Activated naive CD4-positive, alpha-beta T cell treated with anti-CD3 and anti-CD28 coated beads for 36 hours (primary cell): ENCODE measurements at regions of chr15 and their contacts with region 1.

Region 1: DNA sequence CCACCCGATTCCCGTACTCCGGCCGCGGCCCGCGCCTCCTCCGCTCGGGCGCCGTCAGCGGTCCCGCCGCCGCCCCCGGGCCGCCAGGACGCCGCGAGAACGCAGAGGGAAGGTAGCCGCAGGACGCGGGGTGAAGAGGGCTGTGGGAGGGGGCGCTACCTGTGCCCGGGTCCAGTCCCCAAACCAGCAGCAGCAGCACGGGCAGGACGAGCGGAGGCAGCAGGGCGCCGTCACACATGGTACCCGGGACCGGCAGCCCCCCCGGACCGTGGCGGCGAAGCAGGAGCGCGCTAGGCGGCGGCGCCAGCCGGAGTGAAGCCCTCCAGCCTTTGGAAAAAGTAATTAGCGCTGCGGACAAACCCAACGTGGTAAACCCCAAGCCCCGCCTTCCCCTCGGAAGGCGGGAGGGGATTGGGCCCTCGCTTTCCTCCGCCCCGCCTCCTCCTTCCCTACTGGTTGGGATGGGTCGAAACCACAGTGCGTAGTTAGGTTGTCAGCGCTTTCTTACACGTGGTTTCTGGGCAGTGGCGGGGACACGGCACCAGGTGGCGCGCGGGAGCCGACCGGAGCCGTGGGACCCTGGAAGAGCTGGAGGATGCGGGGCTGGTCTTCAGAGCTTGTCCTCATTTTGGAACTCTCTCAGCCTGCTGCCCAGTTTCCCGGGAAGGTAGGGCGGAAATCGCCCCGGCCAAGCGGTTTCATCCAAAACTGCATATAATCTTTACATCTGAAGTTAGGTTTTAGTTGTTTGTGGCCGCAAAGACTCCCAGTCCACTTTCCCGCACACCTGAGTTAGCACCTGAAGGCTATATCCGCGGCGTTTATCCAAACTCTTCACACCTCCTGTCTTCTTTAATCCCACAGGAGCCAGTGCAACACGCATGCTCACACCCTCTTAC is at the start of gene ADAMTS17:
- DNase-seq: peak; percentile 96
- H3K4me3 Mint-ChIP-seq: peak within 1 kb of the TSS; percentile 52
- H3K27ac Mint-ChIP-seq: no peak within 1 kb of the TSS
- H3K4me1 Mint-ChIP-seq: peaks cover 9% of the 10 kb centered on the region
- H3K27me3 Mint-ChIP-seq: no peaks in the 10 kb centered on the region
- total RNA-seq, gene ADAMTS17: 0.81 to 1.0 TPM

Region 2: DNA sequence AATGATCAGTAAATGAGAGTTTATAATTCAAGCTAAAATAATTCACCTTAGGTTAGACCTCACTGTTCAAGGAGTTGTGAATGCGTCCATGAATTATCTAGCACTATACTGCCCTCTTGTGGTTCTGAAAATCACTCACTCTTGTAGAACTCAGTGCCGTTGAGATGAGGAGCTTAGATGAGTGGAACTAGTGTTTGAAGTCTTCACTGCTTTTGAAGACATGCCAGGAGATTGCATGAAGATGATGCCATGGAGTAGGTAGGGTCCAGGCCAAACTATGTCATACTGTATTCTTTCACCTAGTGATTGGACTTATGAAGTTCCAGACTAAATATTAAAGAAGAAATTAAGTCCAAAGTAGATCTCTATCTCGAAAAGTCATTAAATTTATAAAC is 637.5 kb before region 1 on chr15:
- CTCF ChIA-PET with region 1: no interaction called
- intact Hi-C with region 1: loop called (anchors 10 kb)
- DNase-seq: peak; percentile 48
- H3K4me3 Mint-ChIP-seq: no peak overlapping the region
- H3K27ac Mint-ChIP-seq: no peak overlapping the region
- H3K4me1 Mint-ChIP-seq: peaks cover 50% of the 10 kb centered on the region
- H3K27me3 Mint-ChIP-seq: no peaks in the 10 kb centered on the region

Region 3: GRCh38 chr15:99961011-99961441 is 380.9 kb before region 1 on chr15:
- CTCF ChIA-PET with region 1: interaction called, 3 read pairs
- intact Hi-C with region 1: loop called (anchors 1 kb)
- DNase-seq: peak; percentile 67
- H3K4me3 Mint-ChIP-seq: no peak overlapping the region
- H3K27ac Mint-ChIP-seq: no peak overlapping the region
- H3K4me1 Mint-ChIP-seq: peaks cover 14% of the 10 kb centered on the region
- H3K27me3 Mint-ChIP-seq: no peaks in the 10 kb centered on the region

Region 4: GRCh38 chr15:100276506-100276905 is 65.4 kb before region 1 on chr15:
- CTCF ChIA-PET with region 1: no interaction called
- intact Hi-C with region 1: no loop called
- DNase-seq: no peak
- H3K4me3 Mint-ChIP-seq: no peak overlapping the region
- H3K27ac Mint-ChIP-seq: no peak overlapping the region
- H3K4me1 Mint-ChIP-seq: no peaks in the 10 kb centered on the region
- H3K27me3 Mint-ChIP-seq: no peaks in the 10 kb centered on the region

Region 5: DNA sequence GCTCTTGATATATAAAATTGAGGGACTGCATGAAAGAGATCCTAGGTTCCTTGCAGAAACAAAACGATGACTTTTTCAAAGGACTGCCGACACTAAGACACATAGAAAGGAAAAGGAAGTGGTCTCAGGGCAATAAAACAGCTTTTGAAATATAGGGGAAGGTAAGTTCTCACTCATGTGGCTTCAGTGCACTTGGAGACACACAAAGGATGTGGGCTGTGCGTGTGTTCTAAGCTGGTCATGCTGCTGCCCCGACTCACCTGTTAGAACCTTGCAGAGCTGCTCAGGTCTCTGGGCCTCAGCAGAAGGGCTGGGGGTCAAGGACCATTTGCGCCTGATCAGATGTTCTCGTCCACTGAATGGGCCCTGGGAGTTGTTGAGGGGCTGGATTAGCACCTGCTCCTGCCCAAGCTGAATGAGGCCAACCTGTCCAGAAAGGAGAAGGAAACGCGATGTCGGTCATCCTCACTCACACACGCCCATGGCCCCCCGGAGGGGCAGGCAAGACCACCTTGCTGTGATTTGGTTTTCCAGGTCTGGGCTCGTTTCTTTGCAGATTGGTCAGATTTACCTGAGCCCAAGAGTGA is 11.2 kb before region 1 on chr15:
- CTCF ChIA-PET with region 1: interaction called, 9 read pairs
- intact Hi-C with region 1: loop called (anchors 1 kb)
- DNase-seq: peak; percentile 63
- H3K4me3 Mint-ChIP-seq: peak overlapping the region; percentile 45
- H3K27ac Mint-ChIP-seq: no peak overlapping the region
- H3K4me1 Mint-ChIP-seq: peaks cover 69% of the 10 kb centered on the region
- H3K27me3 Mint-ChIP-seq: no peaks in the 10 kb centered on the region

Region 6: GRCh38 chr15:100602064-100602822 is 260.3 kb after region 1 on chr15 and contains the starts of genes ASB7 and LINS1:
- CTCF ChIA-PET with region 1: interaction called, 3 read pairs
- intact Hi-C with region 1: loop called (anchors 2 kb)
- DNase-seq: peak; percentile 99
- H3K4me3 Mint-ChIP-seq: no peak within 1 kb of the TSS
- H3K27ac Mint-ChIP-seq: no peak within 1 kb of the TSS
- H3K4me1 Mint-ChIP-seq: peaks cover 56% of the 10 kb centered on the region
- H3K27me3 Mint-ChIP-seq: no peaks in the 10 kb centered on the region
- total RNA-seq, gene ASB7: 15.6 to 16.8 TPM
- total RNA-seq, gene LINS1: 36.8 to 37.1 TPM